Posterior cingulate gyrus (tissue), 11 donors: ENCODE measurements at regions of chr7 and their contacts with region 1.

Region 1: DNA sequence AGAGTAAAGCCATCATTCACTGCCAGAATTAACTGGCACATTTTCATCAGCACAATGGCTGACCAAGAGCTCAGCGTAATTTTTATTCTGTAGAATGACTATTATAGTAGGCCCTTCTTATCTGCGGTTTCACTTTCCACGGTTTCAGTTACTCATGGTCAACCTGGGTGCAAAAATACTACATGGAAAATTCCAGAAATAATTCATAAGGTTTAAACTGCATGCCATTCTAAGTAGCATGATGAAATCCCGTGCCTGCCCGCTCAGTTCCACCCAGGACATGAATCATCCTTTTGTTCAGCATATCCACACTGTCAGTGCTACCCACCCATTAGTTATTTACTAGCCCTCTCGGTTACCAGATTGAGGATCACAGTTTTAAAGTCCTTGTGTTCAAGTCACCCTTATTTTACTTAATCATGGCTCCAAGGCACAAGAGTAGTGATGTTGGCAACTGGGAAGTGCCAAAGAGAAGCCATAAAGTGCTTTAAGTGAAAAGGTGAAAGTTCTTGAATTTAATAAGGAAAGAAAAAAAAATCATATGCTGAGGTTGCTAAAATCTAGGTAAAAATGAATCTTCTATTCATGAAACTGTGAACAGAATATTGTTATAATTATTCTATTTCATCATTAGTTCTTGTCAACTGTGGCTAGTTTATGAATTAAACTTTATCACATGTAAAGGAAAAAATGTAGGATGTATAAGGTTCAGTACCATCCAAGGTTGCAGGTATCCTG is 204.9 kb downstream of the DOCK4 start:
- DNase-seq: peak in 1 of 10 donors; percentile 36

Region 2: DNA sequence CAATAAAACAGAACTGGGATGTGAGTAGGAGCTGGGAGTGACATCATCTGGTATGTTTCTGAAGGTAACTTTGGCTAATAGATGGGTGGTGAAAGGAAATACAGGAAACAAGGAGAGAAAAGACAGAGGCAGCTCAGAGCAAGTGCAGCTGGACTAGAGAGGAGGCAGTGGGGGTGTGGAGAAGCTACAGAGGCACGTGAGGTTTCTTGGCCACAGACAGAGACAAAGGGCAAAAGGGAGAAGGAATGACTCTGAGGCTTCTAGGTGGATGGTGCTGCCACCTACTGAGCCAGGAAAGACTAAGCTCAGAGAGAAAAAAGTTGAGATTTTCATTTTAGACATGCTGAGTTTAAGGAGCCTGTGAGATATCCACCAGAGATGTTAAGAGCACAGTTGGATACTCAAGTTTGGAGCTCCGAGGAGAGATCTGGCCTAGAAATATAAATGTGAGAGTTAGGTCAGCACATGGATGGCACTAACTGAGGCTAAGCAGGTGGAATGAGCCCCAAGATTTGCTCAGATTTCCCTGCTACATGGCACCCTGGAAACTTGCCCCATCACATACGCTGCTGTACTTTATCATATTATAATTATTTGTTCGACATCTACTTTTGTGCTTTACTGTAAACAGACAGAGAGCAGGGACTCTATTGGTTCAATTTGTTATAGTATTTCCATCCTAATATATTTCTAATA is 145.9 kb before region 1 on chr7:
- intact Hi-C with region 1: no loop called
- DNase-seq: peak in 7 of 10 donors; percentile 31 to 89 (median 46)

Region 3: GRCh38 chr7:112129655-112130323 is 128.5 kb after region 1 on chr7:
- intact Hi-C with region 1: loop called (anchors 10 kb)
- DNase-seq: peak in 1 of 10 donors; percentile 67